ENCODE measurements at regions of chr3 and their contacts with region 1.

Region 1: GRCh38 chr3:30644593-30645012 is 38.2 kb downstream of the TGFBR2 start:
- DNase-seq: peak in 10 of 14 experiments; percentile 26 to 87 (median 50)
- ATAC-seq: peak; percentile 62
- H3K4me3 ChIP-seq: peak overlapping the region; percentile 14
- H3K4me3 Mint-ChIP-seq: peak overlapping the region; percentile 79
- H3K27ac ChIP-seq: peak overlapping the region; percentile 72 to 76
- H3K27ac Mint-ChIP-seq: peak overlapping the region; percentile 96
- H3K4me1 ChIP-seq: peaks cover 85% of the 10 kb centered on the region
- H3K4me1 Mint-ChIP-seq: peaks cover 99% of the 10 kb centered on the region
- H3K27me3 ChIP-seq: no peaks in the 10 kb centered on the region
- H3K27me3 Mint-ChIP-seq: no peaks in the 10 kb centered on the region
- CTCF ChIP-seq: no peak

Region 2: GRCh38 chr3:30628901-30629590 is 15.6 kb before region 1 on chr3:
- CTCF ChIA-PET with region 1: interaction called, 6 read pairs
- POLR2A ChIA-PET with region 1: interaction called, 54 read pairs
- intact Hi-C with region 1: loop called in 1 of 2 experiments (anchors 1 kb)
- DNase-seq: peak in 4 of 14 experiments; percentile 43 to 75 (median 73)
- ATAC-seq: peak; percentile 32
- H3K4me3 ChIP-seq: no peak overlapping the region
- H3K4me3 Mint-ChIP-seq: peak overlapping the region; percentile 68
- H3K27ac ChIP-seq: peak overlapping the region; percentile 77 to 90
- H3K27ac Mint-ChIP-seq: peak overlapping the region; percentile 96
- H3K4me1 ChIP-seq: peaks cover 74% of the 10 kb centered on the region
- H3K4me1 Mint-ChIP-seq: peaks cover 100% of the 10 kb centered on the region
- H3K27me3 ChIP-seq: no peaks in the 10 kb centered on the region
- H3K27me3 Mint-ChIP-seq: no peaks in the 10 kb centered on the region
- CTCF ChIP-seq: peak; percentile 40

Region 3: GRCh38 chr3:30681643-30682211 is 37.1 kb after region 1 on chr3:
- CTCF ChIA-PET with region 1: no interaction called
- POLR2A ChIA-PET with region 1: interaction called, 4 read pairs
- intact Hi-C with region 1: loop called (anchors 5 to 10 kb)
- DNase-seq: no peak
- ATAC-seq: peak; percentile 53
- H3K4me3 ChIP-seq: no peak overlapping the region
- H3K4me3 Mint-ChIP-seq: peak overlapping the region; percentile 57
- H3K27ac ChIP-seq: peak overlapping the region; percentile 13 to 19
- H3K27ac Mint-ChIP-seq: peak overlapping the region; percentile 86
- H3K4me1 ChIP-seq: peaks cover 52% of the 10 kb centered on the region
- H3K4me1 Mint-ChIP-seq: peaks cover 95% of the 10 kb centered on the region
- H3K27me3 ChIP-seq: no peaks in the 10 kb centered on the region
- H3K27me3 Mint-ChIP-seq: no peaks in the 10 kb centered on the region
- CTCF ChIP-seq: no peak

Region 4: GRCh38 chr3:30742796-30743619 is 98.4 kb after region 1 on chr3:
- CTCF ChIA-PET with region 1: no interaction called
- POLR2A ChIA-PET with region 1: no interaction called
- intact Hi-C with region 1: no loop called
- DNase-seq: no peak
- ATAC-seq: no peak
- H3K4me3 ChIP-seq: no peak overlapping the region
- H3K4me3 Mint-ChIP-seq: no peak overlapping the region
- H3K27ac ChIP-seq: no peak overlapping the region
- H3K27ac Mint-ChIP-seq: no peak overlapping the region
- H3K4me1 ChIP-seq: no peaks in the 10 kb centered on the region
- H3K4me1 Mint-ChIP-seq: peaks cover 25% of the 10 kb centered on the region
- H3K27me3 ChIP-seq: no peaks in the 10 kb centered on the region
- H3K27me3 Mint-ChIP-seq: no peaks in the 10 kb centered on the region
- CTCF ChIP-seq: no peak

Region 5: GRCh38 chr3:31423482-31423881 is 778.9 kb after region 1 on chr3:
- CTCF ChIA-PET with region 1: no interaction called
- POLR2A ChIA-PET with region 1: no interaction called
- intact Hi-C with region 1: no loop called
- DNase-seq: no peak
- ATAC-seq: no peak
- H3K4me3 ChIP-seq: no peak overlapping the region
- H3K4me3 Mint-ChIP-seq: no peak overlapping the region
- H3K27ac ChIP-seq: no peak overlapping the region
- H3K27ac Mint-ChIP-seq: no peak overlapping the region
- H3K4me1 ChIP-seq: peaks cover 7% of the 10 kb centered on the region
- H3K4me1 Mint-ChIP-seq: peaks cover 23% of the 10 kb centered on the region
- H3K27me3 ChIP-seq: no peaks in the 10 kb centered on the region
- H3K27me3 Mint-ChIP-seq: no peaks in the 10 kb centered on the region
- CTCF ChIP-seq: no peak